GM10248 (cell line): ENCODE measurements at regions of chr6 and their contacts with region 1.

Region 1: GRCh38 chr6:72411872-72412708 is 209.8 kb upstream of the KCNQ5 start:
- DNase-seq: peak; percentile 80
- CTCF ChIP-seq: peak; percentile 100

Region 2: GRCh38 chr6:72390548-72390947 is 21.5 kb before region 1 on chr6:
- CTCF ChIA-PET with region 1: interaction called, 19 read pairs
- POLR2A ChIA-PET with region 1: no interaction called
- DNase-seq: no peak
- CTCF ChIP-seq: no peak

Region 3: DNA sequence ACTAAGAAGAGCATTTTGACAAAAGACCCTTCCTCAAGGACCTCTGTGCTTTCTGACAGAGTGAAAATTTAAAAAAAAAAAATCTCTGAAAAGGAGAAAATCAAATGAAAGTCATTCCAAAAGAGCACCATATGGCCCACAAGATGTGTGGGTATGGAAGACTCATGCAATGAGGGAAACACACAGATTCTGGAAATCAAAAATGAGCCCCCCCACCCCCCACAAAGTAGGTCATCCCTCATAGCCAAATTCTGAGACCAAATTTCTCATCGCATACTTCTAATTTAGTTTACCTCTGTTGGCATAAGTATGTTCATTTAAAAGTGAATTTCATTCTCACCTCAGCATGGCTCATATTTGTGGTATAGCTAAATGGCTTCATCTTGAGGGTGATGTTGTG is 28.5 kb after region 1 on chr6:
- CTCF ChIA-PET with region 1: interaction called, 11 read pairs
- POLR2A ChIA-PET with region 1: no interaction called
- DNase-seq: no peak
- CTCF ChIP-seq: no peak

Region 4: DNA sequence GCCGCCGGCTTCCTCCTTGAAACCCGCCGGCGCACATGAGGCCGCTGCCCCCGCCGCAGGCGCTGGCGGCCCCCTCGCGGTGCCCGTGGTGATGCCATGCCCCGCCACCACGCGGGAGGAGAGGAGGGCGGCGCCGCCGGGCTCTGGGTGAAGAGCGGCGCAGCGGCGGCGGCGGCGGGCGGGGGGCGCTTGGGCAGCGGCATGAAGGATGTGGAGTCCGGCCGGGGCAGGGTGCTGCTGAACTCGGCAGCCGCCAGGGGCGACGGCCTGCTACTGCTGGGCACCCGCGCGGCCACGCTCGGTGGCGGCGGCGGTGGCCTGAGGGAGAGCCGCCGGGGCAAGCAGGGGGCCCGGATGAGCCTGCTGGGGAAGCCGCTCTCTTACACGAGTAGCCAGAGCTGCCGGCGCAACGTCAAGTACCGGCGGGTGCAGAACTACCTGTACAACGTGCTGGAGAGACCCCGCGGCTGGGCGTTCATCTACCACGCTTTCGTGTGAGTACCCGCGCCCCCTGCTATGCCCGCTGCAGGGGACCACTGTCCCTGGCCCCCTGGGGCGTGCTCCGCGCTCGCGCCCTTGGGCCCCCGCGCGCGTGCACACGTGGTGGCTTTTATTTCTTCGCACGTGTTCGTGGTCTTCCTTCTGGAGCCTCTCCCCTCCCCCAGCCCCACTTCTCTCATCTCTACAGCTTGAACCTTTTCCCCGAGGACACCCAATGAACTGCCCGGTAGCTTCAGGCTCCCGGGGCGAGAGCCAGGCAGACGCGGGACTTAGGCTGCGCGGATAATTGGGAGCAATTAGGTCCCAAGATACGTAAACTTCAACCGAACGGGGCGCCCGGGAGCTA is 210.2 kb after region 1 on chr6:
- CTCF ChIA-PET with region 1: interaction called, 19 read pairs
- POLR2A ChIA-PET with region 1: no interaction called
- DNase-seq: peak; percentile 64
- CTCF ChIP-seq: peak; percentile 32

Region 5: DNA sequence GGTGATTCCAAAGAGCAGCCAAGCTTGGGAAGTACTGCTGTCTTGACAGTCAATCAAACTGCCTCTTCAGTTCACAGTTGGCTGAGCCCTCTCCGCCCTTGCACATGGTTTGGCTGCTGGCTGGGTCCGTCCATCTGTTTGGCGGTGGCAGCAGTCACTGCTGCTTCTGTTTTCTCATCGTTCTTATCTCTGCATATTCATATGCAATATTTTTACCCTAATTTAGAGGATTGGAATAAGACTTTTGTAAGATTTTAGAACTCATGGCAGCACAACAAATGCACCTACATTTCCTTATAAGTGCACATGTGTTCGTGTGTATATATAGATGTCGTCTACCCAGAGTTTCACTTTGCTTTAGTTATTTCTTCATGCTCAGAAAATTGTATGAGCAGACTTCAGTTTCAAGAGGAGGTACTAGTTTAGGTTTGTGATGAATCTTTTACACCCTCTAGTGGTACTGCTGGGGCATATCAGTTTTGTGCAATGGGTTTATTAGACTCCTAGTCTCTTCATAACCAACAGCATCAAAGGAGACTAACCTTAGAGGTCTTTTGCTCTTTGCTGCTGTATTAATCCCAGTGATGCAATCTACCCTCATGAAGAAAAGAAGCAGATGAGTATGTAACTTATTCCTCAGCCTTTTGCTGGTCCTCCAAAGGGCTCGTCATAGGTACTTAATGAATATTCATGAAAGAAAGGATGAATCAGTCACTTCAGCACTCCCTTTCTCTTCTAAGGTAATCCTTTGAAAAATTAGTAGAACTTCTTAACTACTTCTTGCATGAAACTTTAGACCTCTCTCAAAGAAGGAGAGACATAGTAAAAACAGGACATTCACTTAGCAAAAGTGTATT is 768.9 kb after region 1 on chr6:
- CTCF ChIA-PET with region 1: interaction called, 30 read pairs
- POLR2A ChIA-PET with region 1: no interaction called
- DNase-seq: peak; percentile 56
- CTCF ChIP-seq: peak; percentile 83